Heart left ventricle (tissue), 16 donors: ENCODE measurements at regions of chr6 and their contacts with region 1.

Region 1: DNA sequence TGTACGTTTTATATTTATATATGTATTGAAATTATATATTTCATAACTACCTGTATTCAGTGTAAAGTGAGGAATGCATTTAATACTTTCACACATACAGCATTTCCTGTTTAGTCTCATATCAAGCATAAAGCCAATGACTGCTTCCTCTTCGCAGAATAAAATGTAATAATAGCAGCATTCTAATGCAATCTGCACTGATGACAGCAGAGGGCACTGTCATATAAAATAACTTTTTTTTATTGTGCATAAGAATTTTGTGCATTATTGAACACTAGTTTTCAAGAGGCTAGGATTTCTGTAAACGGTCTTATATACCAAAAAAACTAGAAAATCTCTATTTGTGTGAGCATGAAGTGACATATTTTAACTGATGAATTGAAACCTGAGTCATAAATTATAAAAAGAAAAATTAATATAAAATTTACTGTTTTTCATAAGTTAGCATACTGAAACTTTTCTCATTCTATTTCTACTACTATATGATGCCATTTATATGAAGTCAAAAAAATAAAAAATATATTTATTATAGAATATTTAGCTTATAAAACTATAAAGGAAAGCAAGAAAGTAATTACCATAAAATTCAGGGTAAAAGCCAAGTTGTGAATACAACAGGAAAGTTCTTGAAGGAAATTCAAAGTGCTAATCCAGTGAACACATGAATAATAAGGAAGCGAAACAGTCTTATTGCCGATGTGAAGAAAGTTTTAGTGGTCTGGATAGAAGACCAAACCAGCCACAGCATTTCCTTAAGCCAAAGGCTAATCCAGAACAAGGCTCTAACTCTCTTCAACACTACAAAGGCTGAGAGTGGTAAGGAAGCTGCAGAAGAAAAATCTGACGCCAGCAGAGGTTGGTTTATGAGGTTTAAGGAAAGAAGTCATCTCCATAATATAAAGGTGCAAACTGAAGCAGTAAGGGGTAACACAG is 36.3 kb downstream of the RNF146 start:
- DNase-seq: no peak
- ATAC-seq: peak in 2 of 4 donors; percentile 31 to 44
- H3K4me3 ChIP-seq: no peak overlapping the region
- H3K27ac ChIP-seq: no peak overlapping the region
- H3K4me1 ChIP-seq: peaks cover 0 to 39% (median 13%) of the 10 kb centered on the region in 12 donors
- H3K27me3 ChIP-seq: no peaks in the 10 kb centered on the region
- CTCF ChIP-seq: peak; percentile 46 to 82 (median 66)
- POLR2A ChIP-seq: no peak

Region 2: GRCh38 chr6:127031511-127031910 is 271.5 kb before region 1 on chr6:
- intact Hi-C with region 1: no loop called
- DNase-seq: no peak
- ATAC-seq: no peak
- H3K4me3 ChIP-seq: no peak overlapping the region
- H3K27ac ChIP-seq: no peak overlapping the region
- H3K4me1 ChIP-seq: no peaks in the 10 kb centered on the region
- H3K27me3 ChIP-seq: no peaks in the 10 kb centered on the region
- CTCF ChIP-seq: no peak
- POLR2A ChIP-seq: no peak

Region 3: DNA sequence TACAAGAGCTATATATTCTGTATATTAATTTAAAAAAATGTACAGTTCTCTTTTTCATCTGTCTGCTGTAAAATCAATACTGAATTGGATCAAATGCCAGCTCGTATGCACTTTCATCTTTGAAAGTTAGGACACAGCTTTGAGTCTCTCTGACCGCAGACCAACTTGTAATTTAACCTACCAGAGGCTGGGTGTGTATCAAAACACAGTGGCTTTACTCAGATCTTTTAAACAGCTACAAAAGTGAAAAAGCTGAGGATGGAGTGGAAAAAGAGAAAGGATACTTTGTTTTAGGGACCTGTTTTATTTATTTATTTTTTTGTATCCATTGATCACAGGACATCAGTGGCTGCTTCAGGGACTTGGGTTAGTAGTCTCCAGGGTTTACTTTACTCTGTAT is 112.1 kb after region 1 on chr6:
- intact Hi-C with region 1: loop called in 8 of 10 experiments (anchors 5 to 10 kb)
- DNase-seq: no peak
- ATAC-seq: no peak
- H3K4me3 ChIP-seq: no peak overlapping the region
- H3K27ac ChIP-seq: no peak overlapping the region
- H3K4me1 ChIP-seq: peaks cover 0 to under 1% (median 0%) of the 10 kb centered on the region in 12 donors
- H3K27me3 ChIP-seq: no peaks in the 10 kb centered on the region
- CTCF ChIP-seq: no peak
- POLR2A ChIP-seq: no peak

Region 4: GRCh38 chr6:127420556-127420955 is 117.6 kb after region 1 on chr6:
- intact Hi-C with region 1: loop called in 8 of 10 experiments (anchors 5 to 10 kb)
- DNase-seq: peak in 4 of 5 donors; percentile 23 to 68 (median 38)
- ATAC-seq: peak; percentile 69 to 98 (median 90)
- H3K4me3 ChIP-seq: no peak overlapping the region
- H3K27ac ChIP-seq: peak overlapping the region in 1 of 12 donors; percentile 43
- H3K4me1 ChIP-seq: peaks cover 0 to 10% (median 0%) of the 10 kb centered on the region in 12 donors
- H3K27me3 ChIP-seq: no peaks in the 10 kb centered on the region
- CTCF ChIP-seq: peak in 11 of 12 donors; percentile 10 to 69 (median 46)
- POLR2A ChIP-seq: no peak

Region 5: DNA sequence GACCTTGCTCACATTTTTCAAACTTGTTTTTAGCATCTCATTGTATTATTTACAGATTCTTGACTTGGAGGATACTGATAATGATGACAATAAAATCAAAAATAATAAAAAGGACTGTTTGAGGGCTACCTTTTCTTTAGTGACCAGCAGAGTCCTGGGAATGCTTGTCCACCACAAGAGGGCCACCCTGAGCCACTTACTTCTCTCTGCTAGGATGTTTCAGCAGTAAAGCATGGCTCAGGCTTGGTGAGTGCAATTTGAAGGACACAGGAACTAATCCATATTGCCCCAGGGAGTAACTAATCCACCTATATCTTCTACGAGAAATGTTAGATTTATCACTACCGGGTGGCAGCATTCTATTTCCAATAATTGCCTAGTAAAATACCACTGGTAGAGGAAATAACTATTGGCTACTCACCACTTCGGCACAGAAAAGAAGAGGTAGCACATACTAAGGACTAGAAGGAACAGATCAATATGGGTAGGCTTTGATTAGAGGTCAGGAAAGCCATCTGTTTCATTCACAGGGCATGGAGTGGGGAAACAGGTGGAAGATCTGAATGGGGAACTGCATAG is 162.0 kb after region 1 on chr6:
- intact Hi-C with region 1: loop called in 1 of 10 experiments (anchors 10 kb)
- DNase-seq: peak; percentile 51 to 66 (median 62)
- ATAC-seq: peak; percentile 44 to 94 (median 89)
- H3K4me3 ChIP-seq: no peak overlapping the region
- H3K27ac ChIP-seq: peak overlapping the region in 5 of 12 donors; percentile 3 to 65 (median 44)
- H3K4me1 ChIP-seq: peaks cover 0 to 3% (median 0%) of the 10 kb centered on the region in 12 donors
- H3K27me3 ChIP-seq: no peaks in the 10 kb centered on the region
- CTCF ChIP-seq: peak; percentile 61 to 86 (median 74)
- POLR2A ChIP-seq: no peak

Region 6: DNA sequence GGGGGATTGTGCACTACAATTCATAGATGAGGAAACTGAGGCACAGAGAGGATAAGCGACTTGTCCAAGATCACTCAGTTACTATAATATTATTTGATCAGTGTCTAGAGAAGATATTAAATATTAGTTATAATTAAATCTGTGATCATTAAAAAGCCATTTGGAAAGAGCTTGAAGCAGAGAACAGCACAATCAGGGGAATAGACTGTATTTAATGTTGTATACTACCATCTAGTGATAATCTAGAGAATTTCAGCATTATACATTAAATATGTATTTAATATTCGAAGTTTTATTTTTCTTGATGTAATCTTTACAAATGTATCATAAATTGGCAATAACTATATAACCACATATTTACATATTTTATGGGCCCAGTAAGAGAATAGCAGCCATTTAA is 236.3 kb after region 1 on chr6:
- intact Hi-C with region 1: loop called in 8 of 10 experiments (anchors 5 to 10 kb)
- DNase-seq: no peak
- ATAC-seq: no peak
- H3K4me3 ChIP-seq: no peak overlapping the region
- H3K27ac ChIP-seq: no peak overlapping the region
- H3K4me1 ChIP-seq: no peaks in the 10 kb centered on the region
- H3K27me3 ChIP-seq: peaks cover 0 to 23% (median 2%) of the 10 kb centered on the region in 9 donors
- CTCF ChIP-seq: peak; percentile 16 to 63 (median 34)
- POLR2A ChIP-seq: no peak

Region 7: DNA sequence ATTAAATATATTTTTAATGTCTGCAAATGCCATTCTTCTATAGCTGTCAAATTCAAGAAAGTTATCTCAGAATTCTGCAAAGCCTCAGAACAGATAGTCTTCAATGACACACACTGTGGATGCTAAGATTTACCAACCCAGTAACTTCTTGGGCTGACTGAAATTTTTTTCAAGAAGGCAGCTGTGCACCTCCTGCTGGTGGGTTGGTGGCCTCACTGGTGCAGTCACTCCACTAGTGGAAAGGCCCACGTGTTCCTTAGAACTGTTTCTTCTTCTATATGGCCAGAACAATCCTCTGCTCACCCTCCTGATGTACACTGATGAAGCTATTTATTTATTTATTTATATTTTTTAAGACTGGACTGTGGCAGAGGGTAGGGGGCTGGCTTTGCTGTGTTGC is 244.2 kb after region 1 on chr6:
- intact Hi-C with region 1: loop called in 4 of 10 experiments (anchors 5 to 10 kb)
- DNase-seq: no peak
- ATAC-seq: no peak
- H3K4me3 ChIP-seq: no peak overlapping the region
- H3K27ac ChIP-seq: no peak overlapping the region
- H3K4me1 ChIP-seq: no peaks in the 10 kb centered on the region
- H3K27me3 ChIP-seq: peaks cover 0 to 18% (median 0%) of the 10 kb centered on the region in 9 donors
- CTCF ChIP-seq: peak in 6 of 12 donors; percentile 5 to 21 (median 10)
- POLR2A ChIP-seq: no peak